ENCODE measurements at regions of chr1 and their contacts with region 1.

Region 1: GRCh38 chr1:10941891-10942541 is 70.4 kb upstream of the TARDBP start:
- DNase-seq: peak; percentile 39 to 61 (median 47)
- H3K4me3 ChIP-seq: no peak overlapping the region
- H3K4me3 Mint-ChIP-seq: peak overlapping the region in 1 of 8 donors; percentile 59
- H3K27ac ChIP-seq: no peak overlapping the region
- H3K27ac Mint-ChIP-seq: no peak overlapping the region
- H3K4me1 ChIP-seq: peaks cover 29% of the 10 kb centered on the region
- H3K4me1 Mint-ChIP-seq: peaks cover 14 to 42% (median 20%) of the 10 kb centered on the region in 4 donors
- H3K27me3 ChIP-seq: no peaks in the 10 kb centered on the region
- H3K27me3 Mint-ChIP-seq: peaks cover 7 to 25% of the 10 kb centered on the region in 2 donors

Region 2: GRCh38 chr1:10514490-10515235 is 427.4 kb before region 1 on chr1:
- CTCF ChIA-PET with region 1: interaction called, 3 read pairs
- POLR2A ChIA-PET with region 1: no interaction called
- intact Hi-C with region 1: loop called (anchors 1 kb)
- DNase-seq: peak in 2 of 5 donors; percentile 24 to 29
- H3K4me3 ChIP-seq: no peak overlapping the region
- H3K4me3 Mint-ChIP-seq: peak overlapping the region in 7 of 8 donors; percentile 51 to 70 (median 63)
- H3K27ac ChIP-seq: peak overlapping the region; percentile 32
- H3K27ac Mint-ChIP-seq: peak overlapping the region; percentile 77 to 96 (median 93)
- H3K4me1 ChIP-seq: peaks cover 86% of the 10 kb centered on the region
- H3K4me1 Mint-ChIP-seq: peaks cover 69 to 90% (median 80%) of the 10 kb centered on the region in 4 donors
- H3K27me3 ChIP-seq: no peaks in the 10 kb centered on the region
- H3K27me3 Mint-ChIP-seq: no peaks in the 10 kb centered on the region

Region 3: DNA sequence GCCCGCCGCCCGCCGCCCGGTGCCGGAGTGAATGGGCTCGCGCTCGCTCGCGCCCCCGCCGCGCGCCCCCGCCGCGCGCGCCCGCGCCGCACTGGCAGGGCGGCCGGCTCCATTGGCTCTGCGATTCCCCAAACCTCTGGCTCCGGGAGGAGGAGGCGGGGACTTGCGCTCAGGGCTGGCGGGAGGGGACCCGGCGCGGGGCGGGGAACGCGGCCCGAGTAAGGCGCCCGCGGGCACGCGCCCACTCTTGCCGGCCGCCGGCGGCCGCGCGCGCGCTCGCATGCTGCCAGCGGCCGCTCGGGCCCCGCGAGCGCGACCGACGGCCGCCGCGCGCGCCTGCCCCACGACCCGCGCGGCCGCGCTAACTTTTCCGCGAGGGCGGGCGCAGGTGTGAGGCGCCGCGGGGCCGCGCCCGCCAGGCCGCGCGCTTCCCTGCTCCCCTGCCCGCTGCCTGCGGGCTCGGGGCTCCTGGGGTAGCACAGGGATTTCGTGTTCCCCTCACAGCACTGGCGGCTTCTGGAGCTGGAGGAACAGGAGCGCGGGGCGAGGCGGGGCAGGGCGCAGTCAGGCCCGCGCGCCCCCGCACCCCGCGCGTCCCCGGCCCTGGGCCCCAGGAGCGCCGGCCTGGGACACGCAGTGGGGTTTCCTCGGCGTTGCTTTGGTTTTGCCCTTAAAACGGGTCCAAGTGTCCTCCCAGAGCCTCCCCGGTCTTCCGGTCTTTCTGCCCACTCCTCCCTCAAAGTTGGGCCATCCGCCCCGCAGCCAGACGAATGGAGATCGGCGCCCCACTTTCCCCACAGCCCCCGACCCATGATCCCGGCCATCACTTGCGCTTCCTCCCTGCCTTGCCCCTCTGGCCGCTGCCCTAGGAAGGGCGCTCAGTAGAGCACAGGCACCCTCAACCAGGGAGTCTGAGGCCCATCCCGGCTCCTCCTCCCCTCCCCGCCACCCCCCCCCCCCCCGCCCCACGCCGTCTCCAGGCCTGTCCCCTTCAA is 247.1 kb before region 1 on chr1:
- CTCF ChIA-PET with region 1: no interaction called
- POLR2A ChIA-PET with region 1: no interaction called
- intact Hi-C with region 1: loop called (anchors 1 kb)
- DNase-seq: peak; percentile 74 to 86 (median 81)
- H3K4me3 ChIP-seq: peak overlapping the region in 1 of 2 donors; percentile 41
- H3K4me3 Mint-ChIP-seq: peak overlapping the region; percentile 76 to 92 (median 84)
- H3K27ac ChIP-seq: peak overlapping the region; percentile 22
- H3K27ac Mint-ChIP-seq: peak overlapping the region in 6 of 7 donors; percentile 62 to 96 (median 84)
- H3K4me1 ChIP-seq: peaks cover 21% of the 10 kb centered on the region
- H3K4me1 Mint-ChIP-seq: peaks cover 10 to 33% (median 17%) of the 10 kb centered on the region in 4 donors
- H3K27me3 ChIP-seq: no peaks in the 10 kb centered on the region
- H3K27me3 Mint-ChIP-seq: peaks cover 0 to 1% of the 10 kb centered on the region in 2 donors

Region 4: GRCh38 chr1:10867138-10867721 is 74.8 kb before region 1 on chr1:
- CTCF ChIA-PET with region 1: interaction called, 4 read pairs
- POLR2A ChIA-PET with region 1: no interaction called
- intact Hi-C with region 1: loop called (anchors 2 kb)
- DNase-seq: peak; percentile 58 to 67 (median 61)
- H3K4me3 ChIP-seq: peak overlapping the region in 1 of 2 donors; percentile 34
- H3K4me3 Mint-ChIP-seq: peak overlapping the region in 4 of 8 donors; percentile 32 to 80 (median 67)
- H3K27ac ChIP-seq: no peak overlapping the region
- H3K27ac Mint-ChIP-seq: peak overlapping the region in 1 of 7 donors; percentile 29
- H3K4me1 ChIP-seq: peaks cover 13% of the 10 kb centered on the region
- H3K4me1 Mint-ChIP-seq: peaks cover 4 to 18% (median 12%) of the 10 kb centered on the region in 4 donors
- H3K27me3 ChIP-seq: peaks cover 25% of the 10 kb centered on the region
- H3K27me3 Mint-ChIP-seq: peaks cover 26 to 55% of the 10 kb centered on the region in 2 donors

Region 5: DNA sequence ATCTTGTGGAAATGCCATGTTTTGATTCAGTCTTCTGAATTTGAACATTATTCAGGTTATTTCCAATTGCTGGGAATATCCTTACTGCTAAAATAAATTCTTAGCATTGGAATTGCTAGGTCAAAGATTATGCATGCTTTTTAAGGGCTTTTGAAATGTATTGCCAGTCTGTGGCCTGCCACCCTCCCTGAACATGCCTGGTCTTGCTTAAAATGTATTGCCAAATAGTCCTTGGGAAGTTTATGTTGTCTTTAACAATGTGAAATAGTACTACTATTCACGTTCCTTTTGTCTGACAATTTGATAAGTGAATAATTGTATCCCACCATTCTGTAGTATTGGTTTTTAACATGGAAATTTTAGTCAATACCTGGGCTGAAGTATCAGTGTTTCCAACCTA is 84.0 kb after region 1 on chr1:
- CTCF ChIA-PET with region 1: no interaction called
- POLR2A ChIA-PET with region 1: no interaction called
- intact Hi-C with region 1: no loop called
- DNase-seq: no peak
- H3K4me3 ChIP-seq: no peak overlapping the region
- H3K4me3 Mint-ChIP-seq: no peak overlapping the region
- H3K27ac ChIP-seq: no peak overlapping the region
- H3K27ac Mint-ChIP-seq: no peak overlapping the region
- H3K4me1 ChIP-seq: no peaks in the 10 kb centered on the region
- H3K4me1 Mint-ChIP-seq: peaks cover 19 to 29% (median 20%) of the 10 kb centered on the region in 4 donors
- H3K27me3 ChIP-seq: no peaks in the 10 kb centered on the region
- H3K27me3 Mint-ChIP-seq: no peaks in the 10 kb centered on the region

Measured in CD4-positive, alpha-beta memory T cell (primary cell).